Activated B cell treated with CpG ODN at 0.5 μM for 24 hours (primary cell): ENCODE measurements at regions of chr3 and their contacts with region 1.

Region 1: DNA sequence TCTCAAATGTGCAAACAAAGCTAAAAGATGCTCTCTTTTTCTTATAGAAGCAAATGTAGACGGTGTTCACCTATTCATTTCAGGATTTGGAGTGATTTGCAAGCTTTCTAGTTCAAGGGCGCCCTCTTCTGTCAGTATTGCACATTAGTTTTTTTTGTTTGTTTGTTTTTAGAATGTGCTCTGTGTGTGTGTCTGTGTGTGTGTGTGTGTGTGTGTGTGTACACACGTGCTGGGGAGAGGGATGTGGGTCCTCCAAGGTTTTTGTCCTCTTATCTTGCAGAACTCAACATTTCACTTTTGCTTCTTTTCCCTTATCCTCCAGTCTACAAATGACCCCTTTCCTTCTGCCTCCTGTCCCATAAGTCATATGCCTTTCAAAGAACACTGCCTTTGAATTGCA is 23.5 kb downstream of the DNAH1 start:
- DNase-seq: no peak
- ATAC-seq: peak; percentile 40
- H3K4me3 Mint-ChIP-seq: no peak overlapping the region
- H3K27ac Mint-ChIP-seq: no peak overlapping the region
- H3K4me1 Mint-ChIP-seq: no peaks in the 10 kb centered on the region
- H3K27me3 Mint-ChIP-seq: no peaks in the 10 kb centered on the region
- CTCF ChIP-seq: peak; percentile 48

Region 2: GRCh38 chr3:50455161-50456018 is 1884.2 kb before region 1 on chr3:
- CTCF ChIA-PET with region 1: no interaction called
- POLR2A ChIA-PET with region 1: interaction called, 10 read pairs
- intact Hi-C with region 1: no loop called
- DNase-seq: no peak
- ATAC-seq: no peak
- H3K4me3 Mint-ChIP-seq: no peak overlapping the region
- H3K27ac Mint-ChIP-seq: no peak overlapping the region
- H3K4me1 Mint-ChIP-seq: peaks cover 2% of the 10 kb centered on the region
- H3K27me3 Mint-ChIP-seq: peaks cover 14% of the 10 kb centered on the region
- CTCF ChIP-seq: no peak

Region 3: DNA sequence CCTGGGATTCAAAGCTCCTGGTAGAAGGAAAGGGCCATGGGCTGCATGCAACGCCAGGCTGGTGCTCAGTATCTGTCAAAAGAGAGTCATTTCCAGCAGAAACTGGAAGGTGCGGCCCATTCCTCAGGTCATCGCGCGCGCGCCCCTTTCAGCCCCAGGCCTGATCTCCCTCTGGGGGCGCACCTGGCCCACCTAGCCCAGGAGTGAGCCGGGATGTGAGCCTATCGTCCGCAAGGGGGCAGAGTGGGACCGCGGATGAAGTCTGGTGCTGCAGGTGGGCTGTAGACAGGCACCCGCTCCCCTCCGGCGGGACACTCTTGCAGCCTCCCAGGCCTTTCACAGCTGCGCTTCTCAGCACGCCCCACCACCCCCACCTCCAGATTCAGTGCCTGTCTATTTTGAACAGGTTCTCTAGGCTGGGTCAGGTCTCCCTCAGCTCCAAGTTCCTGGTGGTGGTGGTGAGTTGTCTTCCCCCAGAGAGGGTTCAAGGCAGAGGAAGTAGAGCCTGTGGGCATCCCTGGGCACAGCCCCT is 338.1 kb before region 1 on chr3:
- CTCF ChIA-PET with region 1: no interaction called
- POLR2A ChIA-PET with region 1: interaction called, 5 read pairs
- intact Hi-C with region 1: loop called (anchors 1 kb)
- DNase-seq: peak; percentile 85
- ATAC-seq: peak; percentile 99
- H3K4me3 Mint-ChIP-seq: no peak overlapping the region
- H3K27ac Mint-ChIP-seq: no peak overlapping the region
- H3K4me1 Mint-ChIP-seq: peaks cover 5% of the 10 kb centered on the region
- H3K27me3 Mint-ChIP-seq: peaks cover 2% of the 10 kb centered on the region
- CTCF ChIP-seq: peak; percentile 56

Region 4: GRCh38 chr3:52231502-52232293 is 107.9 kb before region 1 on chr3:
- CTCF ChIA-PET with region 1: interaction called, 28 read pairs
- POLR2A ChIA-PET with region 1: no interaction called
- intact Hi-C with region 1: loop called (anchors 1 kb)
- DNase-seq: peak; percentile 89
- ATAC-seq: peak; percentile 90
- H3K4me3 Mint-ChIP-seq: no peak overlapping the region
- H3K27ac Mint-ChIP-seq: no peak overlapping the region
- H3K4me1 Mint-ChIP-seq: peaks cover 50% of the 10 kb centered on the region
- H3K27me3 Mint-ChIP-seq: no peaks in the 10 kb centered on the region
- CTCF ChIP-seq: peak; percentile 41

Region 5: GRCh38 chr3:52238761-52239701 is 100.6 kb before region 1 on chr3 and contains the start of gene TWF2:
- CTCF ChIA-PET with region 1: interaction called, 7 read pairs
- POLR2A ChIA-PET with region 1: interaction called, 13 read pairs
- intact Hi-C with region 1: no loop called
- DNase-seq: peak; percentile 94
- ATAC-seq: peak; percentile 86
- H3K4me3 Mint-ChIP-seq: peak within 1 kb of the TSS; percentile 96
- H3K27ac Mint-ChIP-seq: peak within 1 kb of the TSS; percentile 93
- H3K4me1 Mint-ChIP-seq: peaks cover 72% of the 10 kb centered on the region
- H3K27me3 Mint-ChIP-seq: no peaks in the 10 kb centered on the region
- CTCF ChIP-seq: no peak
- total RNA-seq, gene TWF2: 74.1 and 76.7 TPM in 2 replicates

Region 6: DNA sequence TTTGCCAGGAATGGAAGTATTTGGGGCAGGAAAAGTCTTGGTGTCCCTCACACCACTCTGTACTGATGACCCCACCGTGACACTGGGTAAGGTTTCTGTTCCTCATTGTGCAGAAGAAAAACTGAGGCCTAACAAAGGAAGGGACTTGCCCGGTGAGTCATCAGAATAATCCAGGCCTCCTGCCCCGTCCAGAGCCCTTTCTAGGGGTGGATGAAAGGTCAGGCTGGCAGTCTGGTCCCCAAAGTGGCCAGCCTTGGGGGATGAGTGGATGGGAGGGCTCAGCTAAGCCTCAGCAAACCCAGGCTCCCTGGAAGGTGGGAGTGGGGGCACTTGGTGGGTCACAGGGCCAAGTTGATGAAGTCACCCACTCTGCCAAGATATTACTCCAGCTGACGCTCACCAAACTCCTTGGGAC is 25.8 kb before region 1 on chr3:
- CTCF ChIA-PET with region 1: interaction called, 18 read pairs
- POLR2A ChIA-PET with region 1: interaction called, 5 read pairs
- intact Hi-C with region 1: loop called (anchors 1 kb)
- DNase-seq: peak; percentile 55
- ATAC-seq: peak; percentile 77
- H3K4me3 Mint-ChIP-seq: peak overlapping the region; percentile 55
- H3K27ac Mint-ChIP-seq: peak overlapping the region; percentile 87
- H3K4me1 Mint-ChIP-seq: peaks cover 78% of the 10 kb centered on the region
- H3K27me3 Mint-ChIP-seq: no peaks in the 10 kb centered on the region
- CTCF ChIP-seq: no peak

Region 7: DNA sequence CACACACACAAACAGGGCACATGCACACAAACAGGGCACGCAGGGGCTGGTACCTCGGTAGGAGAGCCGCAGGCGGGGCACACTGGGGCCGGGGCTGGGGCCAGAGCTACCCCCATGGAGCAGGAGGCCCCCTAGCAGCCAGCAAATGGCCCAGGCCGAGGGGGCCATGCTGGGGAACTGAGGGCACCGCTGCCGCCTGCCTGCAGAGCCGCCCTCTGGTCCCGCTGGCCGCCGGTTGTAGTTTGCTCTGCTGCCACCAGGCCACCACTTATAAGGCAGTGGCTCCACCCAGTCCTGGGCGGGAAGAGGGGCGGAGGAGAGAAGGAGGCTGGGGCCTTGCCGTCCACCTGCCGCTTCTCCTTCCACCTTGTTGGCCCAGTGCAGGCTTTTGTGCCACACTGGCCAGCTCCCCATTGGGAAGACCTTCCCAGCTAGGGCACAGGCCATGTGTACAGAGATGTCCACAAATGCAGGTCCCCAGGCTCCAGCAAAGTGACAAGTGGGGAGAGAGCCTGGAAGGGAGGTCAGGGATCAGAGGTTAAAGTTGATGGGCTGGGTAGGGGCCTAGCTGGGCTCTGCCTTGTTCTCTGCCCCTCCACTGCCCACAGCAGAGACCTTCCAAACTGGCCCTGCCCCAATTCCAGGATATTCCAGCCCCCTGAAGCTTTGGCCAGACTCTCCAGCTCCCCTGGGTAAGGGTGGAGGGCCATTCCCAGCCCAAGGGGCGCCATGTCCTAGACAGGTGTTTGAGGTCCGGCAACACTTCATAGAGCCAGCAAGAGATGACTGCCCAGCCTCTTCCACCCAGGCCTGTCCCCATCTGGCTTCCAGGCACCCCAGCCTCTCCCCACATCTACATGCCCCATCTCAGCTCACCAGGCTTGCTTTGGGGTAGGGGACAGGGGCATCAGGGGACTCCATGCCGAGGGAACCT is 105.5 kb after region 1 on chr3 and contains the start of gene SEMA3G:
- CTCF ChIA-PET with region 1: interaction called, 6 read pairs
- POLR2A ChIA-PET with region 1: no interaction called
- intact Hi-C with region 1: loop called (anchors 1 kb)
- DNase-seq: peak; percentile 62
- ATAC-seq: peak; percentile 97
- H3K4me3 Mint-ChIP-seq: no peak within 1 kb of the TSS
- H3K27ac Mint-ChIP-seq: no peak within 1 kb of the TSS
- H3K4me1 Mint-ChIP-seq: peaks cover 9% of the 10 kb centered on the region
- H3K27me3 Mint-ChIP-seq: peaks cover 3% of the 10 kb centered on the region
- CTCF ChIP-seq: no peak
- total RNA-seq, gene SEMA3G: not detected in 2 replicates